H1 (cell line): ENCODE measurements at regions of chr16 and their contacts with region 1.

Region 1: GRCh38 chr16:78437352-78437968 is 338.0 kb downstream of the WWOX start:
- DNase-seq: peak in 1 of 2 experiments; percentile 57
- H3K4me3 ChIP-seq: no peak overlapping the region
- H3K27ac ChIP-seq: no peak overlapping the region
- H3K4me1 ChIP-seq: no peaks in the 10 kb centered on the region
- H3K27me3 ChIP-seq: no peaks in the 10 kb centered on the region
- CTCF ChIP-seq: peak; percentile 36 to 70 (median 59)
- EP300 ChIP-seq: no peak
- POLR2A ChIP-seq: no peak
- RAD21 ChIP-seq: peak; percentile 31 to 42

Region 2: GRCh38 chr16:78425891-78426510 is 11.5 kb before region 1 on chr16:
- CTCF ChIA-PET with region 1: interaction called, 22 read pairs
- POLR2A ChIA-PET with region 1: no interaction called
- DNase-seq: no peak
- H3K4me3 ChIP-seq: no peak overlapping the region
- H3K27ac ChIP-seq: no peak overlapping the region
- H3K4me1 ChIP-seq: no peaks in the 10 kb centered on the region; a peak in 1 of 7 replicates
- H3K27me3 ChIP-seq: no peaks in the 10 kb centered on the region
- CTCF ChIP-seq: no peak
- EP300 ChIP-seq: no peak
- POLR2A ChIP-seq: no peak
- RAD21 ChIP-seq: no peak

Region 3: DNA sequence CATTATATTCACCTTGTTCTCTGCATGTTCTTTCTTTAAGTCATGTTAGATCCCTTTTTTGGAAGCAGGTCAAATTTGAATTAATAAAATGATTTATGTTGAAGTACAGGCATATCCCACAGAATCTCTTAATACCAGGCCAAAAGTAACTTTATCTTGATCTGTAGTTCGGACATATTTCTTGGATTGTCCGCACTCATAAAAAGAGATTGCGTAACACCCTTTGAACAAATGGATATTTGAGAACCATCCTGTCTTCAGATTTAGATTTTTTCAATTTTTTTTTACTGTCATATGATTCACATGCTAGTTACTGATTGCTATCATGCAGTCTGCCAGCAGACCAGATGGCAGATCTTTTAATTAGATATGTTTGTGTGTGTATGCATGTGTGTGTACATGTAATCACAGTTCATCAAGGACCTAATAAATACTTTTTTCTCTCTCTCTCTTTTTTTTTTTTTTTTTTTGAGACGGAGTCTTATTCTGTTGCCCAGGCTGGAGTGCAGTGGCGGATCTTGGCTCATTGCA is 14.6 kb after region 1 on chr16:
- CTCF ChIA-PET with region 1: interaction called, 10 read pairs
- POLR2A ChIA-PET with region 1: no interaction called
- DNase-seq: no peak
- H3K4me3 ChIP-seq: no peak overlapping the region
- H3K27ac ChIP-seq: no peak overlapping the region
- H3K4me1 ChIP-seq: peaks cover 2 to 11% (median 4%) of the 10 kb centered on the region in 4 experiments; a peak in 3 of 7 replicates
- H3K27me3 ChIP-seq: no peaks in the 10 kb centered on the region
- CTCF ChIP-seq: no peak
- EP300 ChIP-seq: no peak
- POLR2A ChIP-seq: no peak
- RAD21 ChIP-seq: no peak